H1 (cell line): ENCODE measurements at regions of chr2 and their contacts with region 1.

Region 1: DNA sequence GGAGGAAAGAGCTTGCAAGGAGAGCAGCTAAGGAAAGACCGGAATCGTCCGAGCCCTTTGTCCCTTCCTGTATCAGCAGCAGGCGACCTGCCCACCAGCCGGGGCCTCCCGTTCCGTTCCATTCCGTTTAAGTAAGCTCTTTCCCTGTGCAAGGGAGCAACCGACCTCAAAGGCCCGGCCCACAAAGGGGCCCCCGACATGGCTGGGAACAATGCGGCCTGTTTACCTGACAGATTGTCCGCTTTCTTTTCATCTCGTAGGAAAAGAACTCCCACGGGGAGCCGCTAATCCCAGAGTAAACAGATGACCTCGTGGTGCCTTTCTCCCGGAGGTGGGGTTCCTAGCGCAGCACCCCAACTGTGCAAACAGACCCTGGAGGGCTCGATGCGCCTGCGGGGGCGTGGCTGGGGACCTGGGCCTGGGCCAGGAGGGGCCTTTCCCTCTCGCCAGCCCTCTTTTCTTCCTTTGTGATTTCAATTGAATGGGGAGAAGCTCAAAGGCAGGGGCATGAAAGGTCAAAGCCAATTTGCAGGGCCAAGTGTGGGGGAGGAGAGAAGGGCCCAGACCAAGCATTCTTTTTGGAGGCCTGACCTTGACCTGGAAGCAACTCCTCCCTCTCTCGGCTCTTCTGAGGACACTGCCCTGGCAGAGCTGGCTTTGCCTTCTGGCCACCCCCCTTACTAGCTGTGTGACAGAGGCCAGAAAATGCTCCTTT is 120.2 kb downstream of the INHBB start:
- DNase-seq: peak; percentile 84 to 89
- H3K4me3 ChIP-seq: peak overlapping the region in 2 of 4 experiments; percentile 14 to 30; a peak in 3 of 8 replicates
- H3K27ac ChIP-seq: no peak overlapping the region
- H3K4me1 ChIP-seq: peaks cover 5 to 13% (median 8%) of the 10 kb centered on the region in 4 experiments
- H3K27me3 ChIP-seq: peaks cover 90 to 98% (median 95%) of the 10 kb centered on the region in 4 experiments
- CTCF ChIP-seq: no peak
- EP300 ChIP-seq: peak in 1 of 2 experiments; percentile 60; a peak in 1 of 3 replicates
- POLR2A ChIP-seq: no peak
- RAD21 ChIP-seq: no peak

Region 2: DNA sequence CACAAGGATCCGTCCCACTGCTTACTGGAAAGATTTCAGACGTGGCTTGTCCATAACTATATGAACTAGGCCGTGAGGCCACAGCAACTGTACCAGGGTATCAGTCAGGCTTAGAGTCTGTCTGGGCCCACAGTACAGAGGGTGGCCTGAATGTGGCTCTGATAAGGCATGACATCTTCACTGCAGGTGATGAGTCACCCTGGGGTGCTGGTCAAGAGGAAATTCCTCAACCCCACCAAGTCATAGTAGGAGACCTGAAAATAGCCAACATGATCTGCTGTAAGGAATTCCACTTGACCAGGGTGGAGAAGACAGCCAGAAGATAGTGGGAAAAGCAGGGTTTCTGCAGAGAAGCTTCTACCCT is 12.5 kb before region 1 on chr2:
- CTCF ChIA-PET with region 1: interaction called, 12 read pairs
- POLR2A ChIA-PET with region 1: no interaction called
- DNase-seq: no peak
- H3K4me3 ChIP-seq: no peak overlapping the region
- H3K27ac ChIP-seq: no peak overlapping the region
- H3K4me1 ChIP-seq: peaks cover 0 to 2% (median 0%) of the 10 kb centered on the region in 4 experiments; a peak in 2 of 7 replicates
- H3K27me3 ChIP-seq: peaks cover 0 to 19% (median 9%) of the 10 kb centered on the region in 4 experiments; a peak in 3 of 7 replicates
- CTCF ChIP-seq: no peak
- EP300 ChIP-seq: no peak
- POLR2A ChIP-seq: no peak
- RAD21 ChIP-seq: no peak

Region 3: GRCh38 chr2:120486441-120487378 is 20.6 kb after region 1 on chr2:
- CTCF ChIA-PET with region 1: interaction called, 10 read pairs
- POLR2A ChIA-PET with region 1: interaction called, 4 read pairs
- DNase-seq: no peak
- H3K4me3 ChIP-seq: no peak overlapping the region
- H3K27ac ChIP-seq: no peak overlapping the region
- H3K4me1 ChIP-seq: peaks cover 0 to 6% (median 0%) of the 10 kb centered on the region in 4 experiments; a peak in 2 of 7 replicates
- H3K27me3 ChIP-seq: peaks cover 0 to 35% (median 14%) of the 10 kb centered on the region in 4 experiments; a peak in 6 of 7 replicates
- CTCF ChIP-seq: no peak
- EP300 ChIP-seq: no peak
- POLR2A ChIP-seq: no peak
- RAD21 ChIP-seq: no peak